Activated B cell treated with CpG ODN at 0.5 μM for 24 hours (primary cell): ENCODE measurements at regions of chr6 and their contacts with region 1.

Region 1: GRCh38 chr6:132780770-132781371 is 17.6 kb downstream of the SLC18B1 start:
- DNase-seq: no peak
- ATAC-seq: peak; percentile 42
- H3K4me3 Mint-ChIP-seq: no peak overlapping the region
- H3K27ac Mint-ChIP-seq: no peak overlapping the region
- H3K4me1 Mint-ChIP-seq: no peaks in the 10 kb centered on the region
- H3K27me3 Mint-ChIP-seq: no peaks in the 10 kb centered on the region
- CTCF ChIP-seq: no peak

Region 2: GRCh38 chr6:132798869-132799538 is 18.1 kb after region 1 on chr6:
- CTCF ChIA-PET with region 1: interaction called, 6 read pairs
- POLR2A ChIA-PET with region 1: interaction called, 5 read pairs
- intact Hi-C with region 1: loop called (anchors 2 kb)
- DNase-seq: peak; percentile 52
- ATAC-seq: peak; percentile 76
- H3K4me3 Mint-ChIP-seq: no peak overlapping the region
- H3K27ac Mint-ChIP-seq: no peak overlapping the region
- H3K4me1 Mint-ChIP-seq: peaks cover 14% of the 10 kb centered on the region
- H3K27me3 Mint-ChIP-seq: no peaks in the 10 kb centered on the region
- CTCF ChIP-seq: no peak